Naive thymus-derived CD4-positive, alpha-beta T cell (primary cell): ENCODE measurements at regions of chr9 and their contacts with region 1.

Region 1: GRCh38 chr9:126781186-126782052 is 23.4 kb upstream of the ZBTB43 start:
- DNase-seq: peak; percentile 55 to 87 (median 74)
- ATAC-seq: peak; percentile 95
- H3K4me3 ChIP-seq: no peak overlapping the region
- H3K4me3 Mint-ChIP-seq: no peak overlapping the region
- H3K27ac ChIP-seq: no peak overlapping the region
- H3K27ac Mint-ChIP-seq: peak overlapping the region in 1 of 9 donors; percentile 55
- H3K4me1 ChIP-seq: no peaks in the 10 kb centered on the region
- H3K4me1 Mint-ChIP-seq: peaks cover 0 to 4% (median 0%) of the 10 kb centered on the region in 7 donors
- H3K27me3 ChIP-seq: no peaks in the 10 kb centered on the region
- H3K27me3 Mint-ChIP-seq: peaks cover 2 to 27% (median 12%) of the 10 kb centered on the region in 5 donors

Region 2: GRCh38 chr9:126500684-126501382 is 280.6 kb before region 1 on chr9:
- CTCF ChIA-PET with region 1: no interaction called
- POLR2A ChIA-PET with region 1: no interaction called
- intact Hi-C with region 1: loop called in 1 of 2 experiments (anchors 1 kb)
- DNase-seq: peak; percentile 28 to 74 (median 63)
- ATAC-seq: peak; percentile 73
- H3K4me3 ChIP-seq: no peak overlapping the region
- H3K4me3 Mint-ChIP-seq: peak overlapping the region in 8 of 10 donors; percentile 8 to 74 (median 48)
- H3K27ac ChIP-seq: no peak overlapping the region
- H3K27ac Mint-ChIP-seq: no peak overlapping the region
- H3K4me1 ChIP-seq: peaks cover 0 to 3% of the 10 kb centered on the region in 2 donors
- H3K4me1 Mint-ChIP-seq: peaks cover 0 to 8% (median 5%) of the 10 kb centered on the region in 7 donors
- H3K27me3 ChIP-seq: peaks cover 0 to 10% of the 10 kb centered on the region in 2 donors
- H3K27me3 Mint-ChIP-seq: peaks cover 4 to 21% (median 5%) of the 10 kb centered on the region in 5 donors

Region 3: DNA sequence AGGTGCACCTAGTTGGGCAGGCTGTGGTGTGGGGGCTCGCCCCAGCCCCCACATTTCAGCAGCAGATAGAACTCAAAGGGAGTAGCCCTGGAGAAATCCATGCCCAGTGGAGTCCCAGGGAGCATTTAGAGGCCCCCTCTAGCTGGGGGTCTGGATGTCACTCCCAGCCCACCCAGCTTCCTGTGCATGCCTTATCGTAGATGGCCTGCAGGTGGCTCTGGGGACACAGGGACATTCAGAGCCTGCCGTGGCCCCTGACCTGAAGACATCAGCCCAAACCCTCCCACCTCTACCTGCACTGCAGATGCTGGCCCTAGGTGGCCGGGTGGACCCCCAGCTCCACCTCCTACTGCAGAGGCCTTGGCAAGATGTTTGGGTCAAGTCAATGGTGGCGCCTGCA is 216.7 kb before region 1 on chr9:
- CTCF ChIA-PET with region 1: no interaction called
- POLR2A ChIA-PET with region 1: no interaction called
- intact Hi-C with region 1: no loop called
- DNase-seq: no peak
- ATAC-seq: no peak
- H3K4me3 ChIP-seq: no peak overlapping the region
- H3K4me3 Mint-ChIP-seq: no peak overlapping the region
- H3K27ac ChIP-seq: no peak overlapping the region
- H3K27ac Mint-ChIP-seq: no peak overlapping the region
- H3K4me1 ChIP-seq: no peaks in the 10 kb centered on the region
- H3K4me1 Mint-ChIP-seq: no peaks in the 10 kb centered on the region
- H3K27me3 ChIP-seq: no peaks in the 10 kb centered on the region
- H3K27me3 Mint-ChIP-seq: peaks cover 23 to 36% (median 32%) of the 10 kb centered on the region in 5 donors

Region 4: GRCh38 chr9:126704873-126705766 is 76.3 kb before region 1 on chr9:
- CTCF ChIA-PET with region 1: interaction called, 244 read pairs
- POLR2A ChIA-PET with region 1: interaction called, 10 read pairs
- intact Hi-C with region 1: loop called (anchors 1 kb)
- DNase-seq: peak; percentile 67 to 89 (median 83)
- ATAC-seq: peak; percentile 90
- H3K4me3 ChIP-seq: peak overlapping the region; percentile 38
- H3K4me3 Mint-ChIP-seq: peak overlapping the region; percentile 45 to 79 (median 72)
- H3K27ac ChIP-seq: no peak overlapping the region
- H3K27ac Mint-ChIP-seq: peak overlapping the region in 3 of 9 donors; percentile 30 to 64 (median 43)
- H3K4me1 ChIP-seq: peaks cover 3 to 10% of the 10 kb centered on the region in 2 donors
- H3K4me1 Mint-ChIP-seq: peaks cover 10 to 23% (median 22%) of the 10 kb centered on the region in 7 donors
- H3K27me3 ChIP-seq: no peaks in the 10 kb centered on the region
- H3K27me3 Mint-ChIP-seq: peaks cover 13 to 35% (median 26%) of the 10 kb centered on the region in 5 donors